ENCODE measurements at regions of chr11 and their contacts with region 1.

Region 1: GRCh38 chr11:124793466-124794278 is 6.5 kb downstream of the MSANTD2 start:
- DNase-seq: peak in 4 of 9 experiments; percentile 15 to 69 (median 39)
- ATAC-seq: peak; percentile 49
- H3K4me3 ChIP-seq: no peak overlapping the region
- H3K4me3 Mint-ChIP-seq: no peak overlapping the region
- H3K27ac ChIP-seq: no peak overlapping the region
- H3K27ac Mint-ChIP-seq: no peak overlapping the region
- H3K4me1 ChIP-seq: peaks cover 3% of the 10 kb centered on the region
- H3K4me1 Mint-ChIP-seq: peaks cover 46% of the 10 kb centered on the region
- H3K27me3 ChIP-seq: no peaks in the 10 kb centered on the region
- H3K27me3 Mint-ChIP-seq: no peaks in the 10 kb centered on the region
- CTCF ChIP-seq: peak; percentile 68

Region 2: GRCh38 chr11:124758317-124759203 is 35.1 kb before region 1 on chr11:
- CTCF ChIA-PET with region 1: interaction called, 46 read pairs
- POLR2A ChIA-PET with region 1: no interaction called
- intact Hi-C with region 1: loop called in 1 of 2 experiments (anchors 1 kb)
- DNase-seq: peak; percentile 42 to 78 (median 70)
- ATAC-seq: peak; percentile 72
- H3K4me3 ChIP-seq: peak overlapping the region; percentile 6 to 16
- H3K4me3 Mint-ChIP-seq: peak overlapping the region; percentile 58
- H3K27ac ChIP-seq: no peak overlapping the region
- H3K27ac Mint-ChIP-seq: no peak overlapping the region
- H3K4me1 ChIP-seq: peaks cover 34% of the 10 kb centered on the region
- H3K4me1 Mint-ChIP-seq: peaks cover 33% of the 10 kb centered on the region
- H3K27me3 ChIP-seq: peaks cover 32 to 39% of the 10 kb centered on the region in 2 experiments
- H3K27me3 Mint-ChIP-seq: peaks cover 40% of the 10 kb centered on the region
- CTCF ChIP-seq: peak; percentile 81

Region 3: DNA sequence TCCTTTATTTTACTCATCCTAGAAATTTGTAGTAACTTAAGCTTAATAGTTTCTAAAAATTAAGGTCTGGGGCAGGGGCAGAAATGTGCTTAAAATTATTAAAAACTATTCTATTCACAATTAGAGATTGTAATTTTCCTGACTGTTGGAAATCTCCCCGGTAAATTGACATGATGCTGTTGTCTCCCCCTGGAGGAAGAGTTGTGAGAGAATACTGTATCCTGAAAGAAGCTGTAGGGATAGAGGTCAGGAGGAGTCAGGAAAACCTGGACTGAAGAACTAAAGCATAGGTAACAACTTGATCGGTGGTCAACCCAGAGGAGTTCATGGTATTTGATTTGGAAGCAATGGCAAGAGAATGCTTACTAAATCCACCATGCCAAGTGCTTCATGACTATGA is 15.4 kb before region 1 on chr11:
- CTCF ChIA-PET with region 1: interaction called, 15 read pairs
- POLR2A ChIA-PET with region 1: no interaction called
- intact Hi-C with region 1: no loop called
- DNase-seq: no peak
- ATAC-seq: no peak
- H3K4me3 ChIP-seq: no peak overlapping the region
- H3K4me3 Mint-ChIP-seq: no peak overlapping the region
- H3K27ac ChIP-seq: no peak overlapping the region
- H3K27ac Mint-ChIP-seq: no peak overlapping the region
- H3K4me1 ChIP-seq: peaks cover 19% of the 10 kb centered on the region
- H3K4me1 Mint-ChIP-seq: peaks cover 22% of the 10 kb centered on the region
- H3K27me3 ChIP-seq: no peaks in the 10 kb centered on the region
- H3K27me3 Mint-ChIP-seq: no peaks in the 10 kb centered on the region
- CTCF ChIP-seq: no peak

Region 4: GRCh38 chr11:124807201-124807600 is 13.5 kb after region 1 on chr11:
- CTCF ChIA-PET with region 1: interaction called, 18 read pairs
- POLR2A ChIA-PET with region 1: no interaction called
- intact Hi-C with region 1: no loop called
- DNase-seq: no peak
- ATAC-seq: no peak
- H3K4me3 ChIP-seq: no peak overlapping the region
- H3K4me3 Mint-ChIP-seq: no peak overlapping the region
- H3K27ac ChIP-seq: no peak overlapping the region
- H3K27ac Mint-ChIP-seq: no peak overlapping the region
- H3K4me1 ChIP-seq: no peaks in the 10 kb centered on the region
- H3K4me1 Mint-ChIP-seq: no peaks in the 10 kb centered on the region
- H3K27me3 ChIP-seq: no peaks in the 10 kb centered on the region
- H3K27me3 Mint-ChIP-seq: no peaks in the 10 kb centered on the region
- CTCF ChIP-seq: no peak